Activated CD8-positive, alpha-beta T cell treated with anti-CD3 and anti-CD28 coated beads, Interleukin-2, amount 10 ng/mL, durations not matched to agents 7 days and 5 days (primary cell): ENCODE measurements at regions of chr11 and their contacts with region 1.

Region 1: GRCh38 chr11:3021125-3021524 is 29.0 kb upstream of the NAP1L4 start:
- DNase-seq: peak; percentile 64
- ATAC-seq: peak; percentile 68
- H3K4me3 Mint-ChIP-seq: no peak overlapping the region
- H3K27ac Mint-ChIP-seq: peak overlapping the region; percentile 53
- H3K4me1 Mint-ChIP-seq: peaks cover 75% of the 10 kb centered on the region
- H3K27me3 Mint-ChIP-seq: no peaks in the 10 kb centered on the region

Region 2: GRCh38 chr11:2860636-2861035 is 160.5 kb before region 1 on chr11:
- CTCF ChIA-PET with region 1: no interaction called
- POLR2A ChIA-PET with region 1: no interaction called
- DNase-seq: peak; percentile 35
- ATAC-seq: peak; percentile 42
- H3K4me3 Mint-ChIP-seq: no peak overlapping the region
- H3K27ac Mint-ChIP-seq: no peak overlapping the region
- H3K4me1 Mint-ChIP-seq: peaks cover 5% of the 10 kb centered on the region
- H3K27me3 Mint-ChIP-seq: peaks cover 29% of the 10 kb centered on the region

Region 3: DNA sequence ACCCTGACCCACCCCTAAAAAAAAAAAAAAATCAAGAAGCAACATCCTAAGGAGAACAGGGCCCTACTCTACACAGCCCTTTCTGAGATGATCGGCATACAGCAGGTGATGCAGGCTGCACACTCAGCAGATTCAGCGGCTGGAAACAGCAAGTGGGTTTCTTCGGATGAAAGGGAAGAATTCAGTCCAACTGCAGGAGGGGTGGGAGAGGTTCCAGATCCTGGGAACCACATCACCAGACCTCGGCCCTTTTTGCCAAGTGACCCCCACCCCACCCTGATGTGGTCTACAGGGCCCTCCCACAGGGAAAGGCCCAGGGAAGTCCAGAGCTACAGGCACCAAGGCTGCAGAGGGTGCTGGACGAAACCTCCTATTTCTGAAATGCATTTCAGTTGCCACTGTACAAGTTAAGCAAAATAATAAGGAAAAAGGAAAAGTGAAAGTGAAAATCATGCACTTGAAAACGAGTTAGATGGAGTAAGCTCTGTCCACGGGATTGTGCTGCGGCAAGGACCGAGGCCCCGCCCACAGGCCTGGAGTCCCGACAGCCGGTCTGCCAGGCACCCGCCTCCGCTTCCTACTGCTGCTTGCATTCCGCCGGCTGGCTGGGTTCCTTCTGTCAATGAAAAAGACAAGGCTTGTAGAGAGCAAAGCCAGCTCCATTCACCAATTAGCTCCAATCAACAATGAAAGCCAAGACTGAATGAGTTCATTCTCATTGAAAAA is 75.9 kb before region 1 on chr11:
- CTCF ChIA-PET with region 1: interaction called, 21 read pairs
- POLR2A ChIA-PET with region 1: no interaction called
- DNase-seq: peak; percentile 71
- ATAC-seq: peak; percentile 72
- H3K4me3 Mint-ChIP-seq: peak overlapping the region; percentile 43
- H3K27ac Mint-ChIP-seq: peak overlapping the region; percentile 72
- H3K4me1 Mint-ChIP-seq: peaks cover 49% of the 10 kb centered on the region
- H3K27me3 Mint-ChIP-seq: no peaks in the 10 kb centered on the region

Region 4: GRCh38 chr11:2968341-2968900 is 52.7 kb before region 1 on chr11:
- CTCF ChIA-PET with region 1: interaction called, 77 read pairs
- POLR2A ChIA-PET with region 1: interaction called, 5 read pairs
- DNase-seq: no peak
- ATAC-seq: no peak
- H3K4me3 Mint-ChIP-seq: no peak overlapping the region
- H3K27ac Mint-ChIP-seq: no peak overlapping the region
- H3K4me1 Mint-ChIP-seq: peaks cover 16% of the 10 kb centered on the region
- H3K27me3 Mint-ChIP-seq: no peaks in the 10 kb centered on the region

Region 5: GRCh38 chr11:2982214-2982613 is 38.9 kb before region 1 on chr11:
- CTCF ChIA-PET with region 1: interaction called, 14 read pairs
- POLR2A ChIA-PET with region 1: interaction called, 8 read pairs
- DNase-seq: no peak
- ATAC-seq: no peak
- H3K4me3 Mint-ChIP-seq: no peak overlapping the region
- H3K27ac Mint-ChIP-seq: peak overlapping the region; percentile 5
- H3K4me1 Mint-ChIP-seq: peaks cover 65% of the 10 kb centered on the region
- H3K27me3 Mint-ChIP-seq: no peaks in the 10 kb centered on the region

Region 6: GRCh38 chr11:3037040-3037944 is 16.2 kb after region 1 on chr11:
- CTCF ChIA-PET with region 1: interaction called, 11 read pairs
- POLR2A ChIA-PET with region 1: no interaction called
- DNase-seq: peak; percentile 58
- ATAC-seq: peak; percentile 62
- H3K4me3 Mint-ChIP-seq: no peak overlapping the region
- H3K27ac Mint-ChIP-seq: peak overlapping the region; percentile 69
- H3K4me1 Mint-ChIP-seq: peaks cover 31% of the 10 kb centered on the region
- H3K27me3 Mint-ChIP-seq: no peaks in the 10 kb centered on the region

Region 7: DNA sequence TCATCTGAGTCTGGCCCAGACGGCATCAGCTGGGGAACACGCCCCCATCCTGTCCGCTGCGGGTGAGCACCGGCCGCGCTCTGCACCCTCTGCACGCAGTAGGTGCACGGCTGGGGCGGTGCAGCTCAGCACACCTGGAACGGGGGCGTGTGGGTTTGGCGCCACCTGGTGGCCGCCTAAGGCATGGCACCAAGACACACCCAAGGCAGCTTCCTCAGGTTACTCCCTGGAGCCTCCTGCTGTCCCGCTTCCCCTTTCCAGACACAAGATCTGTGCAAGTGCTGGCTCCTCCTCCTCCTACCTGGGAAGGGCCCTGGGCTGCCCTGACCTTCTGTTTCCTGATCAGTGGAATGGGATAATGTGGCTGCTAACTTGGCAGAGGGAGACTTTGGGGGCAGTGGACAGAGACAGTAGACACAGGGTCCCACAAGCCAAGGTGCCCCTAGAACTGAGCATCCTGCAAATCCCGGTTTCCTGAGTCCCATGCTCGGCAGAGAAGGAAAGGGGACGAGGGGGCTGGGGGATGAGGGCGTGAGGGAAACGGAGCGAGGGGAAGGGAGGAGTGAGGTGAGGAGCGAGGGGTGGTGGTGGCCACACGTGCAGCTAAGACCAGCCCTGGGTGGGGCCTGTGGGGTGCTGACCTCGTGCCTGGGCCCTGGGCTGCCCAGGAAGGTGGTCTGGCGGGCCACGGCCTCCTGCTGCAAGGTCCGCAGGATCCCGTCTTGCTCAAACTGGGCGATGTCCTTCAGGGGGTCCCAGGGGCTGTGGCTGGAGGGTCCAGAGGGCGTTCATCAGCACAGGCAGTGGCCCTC is 70.9 kb after region 1 on chr11:
- CTCF ChIA-PET with region 1: interaction called, 39 read pairs
- POLR2A ChIA-PET with region 1: no interaction called
- DNase-seq: peak; percentile 80
- ATAC-seq: peak; percentile 91
- H3K4me3 Mint-ChIP-seq: no peak overlapping the region
- H3K27ac Mint-ChIP-seq: peak overlapping the region; percentile 57
- H3K4me1 Mint-ChIP-seq: peaks cover 12% of the 10 kb centered on the region
- H3K27me3 Mint-ChIP-seq: no peaks in the 10 kb centered on the region